ENCODE measurements at regions of chr11 and their contacts with region 1.

Region 1: GRCh38 chr11:12331239-12331874 is 46.0 kb upstream of the PARVA start:
- DNase-seq: peak; percentile 53 to 84
- H3K4me3 ChIP-seq: no peak overlapping the region
- H3K27ac ChIP-seq: no peak overlapping the region
- H3K4me1 ChIP-seq: peaks cover 0 to 11% (median 1%) of the 10 kb centered on the region in 4 experiments; a peak in 4 of 7 replicates
- H3K27me3 ChIP-seq: no peaks in the 10 kb centered on the region; a peak in 1 of 7 replicates
- CTCF ChIP-seq: peak; percentile 42 to 83 (median 80)
- EP300 ChIP-seq: no peak
- POLR2A ChIP-seq: no peak
- RAD21 ChIP-seq: peak; percentile 98

Region 2: DNA sequence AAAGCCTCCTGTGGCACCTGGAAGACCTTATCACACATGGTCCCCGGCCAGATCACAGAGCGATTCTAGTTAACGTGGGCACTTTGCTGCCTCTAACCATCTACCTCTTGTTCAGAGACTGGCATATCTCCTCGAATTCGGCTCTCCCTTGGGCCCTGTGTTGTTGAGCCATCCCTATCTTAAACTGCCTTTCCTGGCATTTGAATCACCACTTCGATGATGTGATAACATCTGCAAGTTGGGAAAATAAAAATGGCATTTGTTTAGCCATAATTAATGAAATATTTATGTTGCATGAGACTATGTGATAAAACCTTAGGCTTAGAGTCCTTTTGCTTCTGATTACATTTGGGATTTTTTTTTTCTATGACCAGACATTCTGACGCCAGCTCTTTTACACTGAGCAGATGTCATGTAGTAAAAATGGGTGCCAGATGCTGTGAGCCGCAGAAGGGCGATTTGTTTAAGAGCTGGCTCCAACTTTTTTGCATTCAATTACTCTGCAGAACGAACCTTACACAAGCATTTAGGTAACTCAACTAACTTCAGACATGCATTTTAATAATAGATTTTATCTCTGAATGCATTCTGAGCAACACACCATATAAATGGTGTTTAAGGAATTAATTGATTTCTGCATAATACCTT is 12.4 kb before region 1 on chr11:
- CTCF ChIA-PET with region 1: interaction called, 32 read pairs
- POLR2A ChIA-PET with region 1: interaction called, 5 read pairs
- DNase-seq: no peak
- H3K4me3 ChIP-seq: no peak overlapping the region
- H3K27ac ChIP-seq: no peak overlapping the region
- H3K4me1 ChIP-seq: peaks cover 0 to 9% (median 0%) of the 10 kb centered on the region in 4 experiments; a peak in 3 of 7 replicates
- H3K27me3 ChIP-seq: no peaks in the 10 kb centered on the region
- CTCF ChIP-seq: no peak
- EP300 ChIP-seq: no peak
- POLR2A ChIP-seq: no peak
- RAD21 ChIP-seq: no peak

Region 3: DNA sequence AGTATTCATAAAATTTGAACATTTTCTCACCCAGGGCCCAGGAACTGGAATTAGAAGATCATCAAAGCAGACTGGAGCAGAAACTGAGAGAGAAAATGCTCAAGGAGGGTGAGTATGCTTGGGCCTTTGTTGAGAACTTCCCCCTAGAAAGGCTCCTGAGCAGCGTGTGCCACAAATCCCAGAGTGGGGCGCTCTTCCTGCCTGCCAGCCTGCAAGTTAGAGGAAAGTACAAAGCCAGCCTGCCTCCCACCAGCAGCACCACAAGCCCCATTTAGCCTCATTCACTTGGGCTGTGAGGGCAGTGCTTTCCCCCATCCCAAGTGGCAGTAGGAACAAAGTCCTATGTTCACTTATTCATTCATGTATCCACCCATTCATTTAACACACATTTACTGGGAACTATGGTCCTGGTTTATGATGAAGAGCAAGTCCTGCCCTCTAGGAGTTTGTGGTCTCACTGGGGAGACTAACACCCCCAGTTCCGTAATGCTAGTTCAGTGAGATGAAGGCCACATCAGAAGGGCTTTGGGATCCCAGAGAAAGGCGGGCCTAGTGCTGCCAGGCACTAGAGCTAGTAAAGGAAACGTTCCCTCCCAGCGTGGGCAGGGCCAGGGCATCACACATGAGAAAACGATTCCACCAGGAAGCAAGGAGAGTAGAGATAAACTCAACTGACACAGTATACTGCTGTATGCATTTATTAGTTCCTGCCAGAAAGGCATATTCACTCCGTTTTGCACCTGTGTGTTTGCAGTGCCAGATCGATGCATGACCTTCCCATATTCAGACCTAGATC is 23.6 kb after region 1 on chr11:
- CTCF ChIA-PET with region 1: interaction called, 13 read pairs
- POLR2A ChIA-PET with region 1: no interaction called
- DNase-seq: no peak
- H3K4me3 ChIP-seq: no peak overlapping the region
- H3K27ac ChIP-seq: no peak overlapping the region
- H3K4me1 ChIP-seq: no peaks in the 10 kb centered on the region; a peak in 1 of 7 replicates
- H3K27me3 ChIP-seq: no peaks in the 10 kb centered on the region
- CTCF ChIP-seq: peak; percentile 27 to 48 (median 47); a peak in 3 of 4 replicates
- EP300 ChIP-seq: no peak
- POLR2A ChIP-seq: no peak
- RAD21 ChIP-seq: peak; percentile 28 to 43; a peak in 3 of 4 replicates

Region 4: GRCh38 chr11:12377824-12378593 is 46.7 kb after region 1 on chr11:
- CTCF ChIA-PET with region 1: interaction called, 15 read pairs
- POLR2A ChIA-PET with region 1: interaction called, 11 read pairs
- DNase-seq: peak; percentile 69 to 86
- H3K4me3 ChIP-seq: peak overlapping the region; percentile 72 to 98 (median 83)
- H3K27ac ChIP-seq: peak overlapping the region; percentile 83
- H3K4me1 ChIP-seq: peaks cover 0 to 6% (median 2%) of the 10 kb centered on the region in 4 experiments; a peak in 3 of 7 replicates
- H3K27me3 ChIP-seq: peaks cover 2 to 12% (median 8%) of the 10 kb centered on the region in 4 experiments
- CTCF ChIP-seq: peak; percentile 2 to 47 (median 19)
- EP300 ChIP-seq: no peak
- POLR2A ChIP-seq: peak; percentile 67 to 68
- RAD21 ChIP-seq: peak; percentile 25 to 43; a peak in 3 of 4 replicates

Region 5: GRCh38 chr11:12914400-12914912 is 583.1 kb after region 1 on chr11:
- CTCF ChIA-PET with region 1: interaction called, 10 read pairs
- POLR2A ChIA-PET with region 1: no interaction called
- DNase-seq: peak; percentile 87 to 89
- H3K4me3 ChIP-seq: peak overlapping the region in 1 of 4 experiments; percentile 21; a peak in 2 of 8 replicates
- H3K27ac ChIP-seq: peak overlapping the region; percentile 20; the same call in 1 of the 2 replicates
- H3K4me1 ChIP-seq: peaks cover 7 to 18% (median 10%) of the 10 kb centered on the region in 4 experiments
- H3K27me3 ChIP-seq: no peaks in the 10 kb centered on the region
- CTCF ChIP-seq: peak; percentile 86 to 98 (median 94)
- EP300 ChIP-seq: no peak; a peak in 1 of 3 replicates
- POLR2A ChIP-seq: 0 out of 3 replicates have a peak, but pooled peaks of 1 of the 2 experiments have one; percentile 30
- RAD21 ChIP-seq: peak; percentile 72 to 76

Measured in H1 (cell line).